ENCODE measurements at regions of chr10 and their contacts with region 1.

Region 1: GRCh38 chr10:60747817-60748469 is 30.3 kb upstream of the CDK1 start:
- DNase-seq: no peak
- H3K4me3 Mint-ChIP-seq: no peak overlapping the region
- H3K27ac Mint-ChIP-seq: no peak overlapping the region
- H3K4me1 Mint-ChIP-seq: peaks cover 9% of the 10 kb centered on the region
- H3K27me3 Mint-ChIP-seq: no peaks in the 10 kb centered on the region
- CTCF ChIP-seq: no peak

Region 2: DNA sequence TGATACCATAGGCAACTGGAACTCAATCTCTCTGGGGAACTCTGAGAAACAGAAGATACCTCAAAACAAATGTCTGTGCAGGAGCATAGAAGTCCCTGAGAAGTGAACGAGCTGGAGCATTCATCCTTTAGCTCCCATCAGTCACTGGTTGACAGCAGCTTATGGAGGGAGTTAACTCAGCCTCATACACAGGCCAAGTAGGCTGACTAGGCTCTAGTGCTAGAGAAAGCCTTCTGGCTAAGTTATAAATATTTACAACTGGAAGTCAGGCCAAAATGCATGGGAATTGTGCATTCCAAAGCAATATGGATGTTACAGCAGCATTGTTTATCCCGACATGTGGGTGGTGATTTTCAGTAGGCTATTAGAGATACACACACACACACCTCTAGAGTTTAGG is 424.8 kb before region 1 on chr10:
- CTCF ChIA-PET with region 1: no interaction called
- POLR2A ChIA-PET with region 1: no interaction called
- intact Hi-C with region 1: no loop called
- DNase-seq: no peak
- H3K4me3 Mint-ChIP-seq: no peak overlapping the region
- H3K27ac Mint-ChIP-seq: no peak overlapping the region
- H3K4me1 Mint-ChIP-seq: no peaks in the 10 kb centered on the region
- H3K27me3 Mint-ChIP-seq: no peaks in the 10 kb centered on the region
- CTCF ChIP-seq: no peak

Region 3: GRCh38 chr10:60654813-60655464 is 93.0 kb before region 1 on chr10:
- CTCF ChIA-PET with region 1: no interaction called
- POLR2A ChIA-PET with region 1: no interaction called
- intact Hi-C with region 1: no loop called
- DNase-seq: peak; percentile 60
- H3K4me3 Mint-ChIP-seq: no peak overlapping the region
- H3K27ac Mint-ChIP-seq: no peak overlapping the region
- H3K4me1 Mint-ChIP-seq: no peaks in the 10 kb centered on the region
- H3K27me3 Mint-ChIP-seq: no peaks in the 10 kb centered on the region
- CTCF ChIP-seq: no peak

Region 4: DNA sequence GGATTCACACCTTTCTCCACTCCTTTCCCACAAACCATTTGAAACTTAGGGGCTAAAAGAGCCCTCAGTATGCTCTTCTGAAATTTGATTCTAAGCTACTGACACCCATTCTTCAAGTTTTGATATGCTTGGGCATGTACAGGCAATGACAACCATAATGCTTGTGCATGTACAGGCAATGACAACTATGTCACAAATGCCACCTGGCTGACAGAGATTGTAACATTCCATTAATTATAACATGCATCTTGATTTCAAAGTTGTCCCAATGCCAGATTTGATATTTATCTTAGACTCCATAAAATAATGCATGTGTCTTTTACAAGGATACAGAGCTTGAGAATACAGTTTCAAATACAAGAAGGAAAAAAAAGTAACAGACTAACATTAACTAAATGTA is 12.8 kb after region 1 on chr10:
- CTCF ChIA-PET with region 1: interaction called, 5 read pairs
- POLR2A ChIA-PET with region 1: interaction called, 11 read pairs
- intact Hi-C with region 1: no loop called
- DNase-seq: peak; percentile 20
- H3K4me3 Mint-ChIP-seq: no peak overlapping the region
- H3K27ac Mint-ChIP-seq: peak overlapping the region; percentile 35
- H3K4me1 Mint-ChIP-seq: peaks cover 13% of the 10 kb centered on the region
- H3K27me3 Mint-ChIP-seq: no peaks in the 10 kb centered on the region
- CTCF ChIP-seq: no peak

Region 5: GRCh38 chr10:60769406-60769805 is 21.5 kb after region 1 on chr10:
- CTCF ChIA-PET with region 1: interaction called, 10 read pairs
- POLR2A ChIA-PET with region 1: interaction called, 3 read pairs
- intact Hi-C with region 1: no loop called
- DNase-seq: no peak
- H3K4me3 Mint-ChIP-seq: no peak overlapping the region
- H3K27ac Mint-ChIP-seq: no peak overlapping the region
- H3K4me1 Mint-ChIP-seq: peaks cover 21% of the 10 kb centered on the region
- H3K27me3 Mint-ChIP-seq: no peaks in the 10 kb centered on the region
- CTCF ChIP-seq: no peak

Region 6: DNA sequence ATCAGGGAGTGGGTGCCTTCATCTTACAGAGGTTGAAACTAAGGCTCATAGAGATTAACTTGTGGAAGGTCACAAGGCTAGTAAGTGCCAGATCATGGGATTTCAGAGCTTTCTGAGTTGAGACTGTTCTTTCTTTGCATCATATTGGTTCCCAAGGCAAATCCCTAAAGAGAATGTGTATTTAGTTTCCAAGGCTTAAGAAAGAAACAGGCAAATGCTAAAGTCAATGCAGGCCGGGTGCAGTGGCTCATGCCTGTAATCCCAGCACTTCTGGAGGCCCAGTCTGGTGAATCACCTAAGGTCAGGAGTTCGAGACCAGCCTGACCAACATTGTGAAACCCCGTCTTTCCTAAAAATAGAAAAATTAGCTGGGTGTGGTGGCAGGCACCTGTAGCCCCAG is 50.1 kb after region 1 on chr10:
- CTCF ChIA-PET with region 1: no interaction called
- POLR2A ChIA-PET with region 1: no interaction called
- intact Hi-C with region 1: no loop called
- DNase-seq: no peak
- H3K4me3 Mint-ChIP-seq: no peak overlapping the region
- H3K27ac Mint-ChIP-seq: no peak overlapping the region
- H3K4me1 Mint-ChIP-seq: peaks cover 6% of the 10 kb centered on the region
- H3K27me3 Mint-ChIP-seq: no peaks in the 10 kb centered on the region
- CTCF ChIP-seq: no peak